ENCODE measurements at regions of chr2 and their contacts with region 1.

Region 1: DNA sequence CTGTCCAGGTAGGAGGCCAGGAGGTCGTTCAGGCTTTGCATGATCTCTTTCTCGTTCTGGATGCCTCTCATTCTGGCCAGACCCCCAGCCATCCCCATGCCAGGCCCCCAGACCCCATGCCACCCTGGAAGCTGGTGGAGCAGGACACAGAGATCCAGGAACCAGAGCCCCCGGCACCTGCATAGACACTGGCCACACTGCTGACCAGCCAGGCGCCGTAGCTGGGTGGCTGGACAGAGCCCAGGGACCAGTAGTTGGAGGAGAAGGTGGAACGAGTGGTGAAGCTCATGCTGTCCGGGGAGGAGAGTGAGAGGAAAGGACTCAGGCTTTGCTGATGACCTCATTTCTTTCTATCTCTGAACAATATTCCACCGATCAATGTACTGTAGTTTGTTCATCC is 35.5 kb downstream of the SLC4A5 start:
- DNase-seq: no peak
- H3K4me3 ChIP-seq: no peak overlapping the region
- H3K27ac ChIP-seq: no peak overlapping the region
- H3K4me1 ChIP-seq: no peaks in the 10 kb centered on the region
- H3K27me3 ChIP-seq: peaks cover 4% of the 10 kb centered on the region in 2 experiments
- CTCF ChIP-seq: no peak
- POLR2A ChIP-seq: no peak

Region 2: DNA sequence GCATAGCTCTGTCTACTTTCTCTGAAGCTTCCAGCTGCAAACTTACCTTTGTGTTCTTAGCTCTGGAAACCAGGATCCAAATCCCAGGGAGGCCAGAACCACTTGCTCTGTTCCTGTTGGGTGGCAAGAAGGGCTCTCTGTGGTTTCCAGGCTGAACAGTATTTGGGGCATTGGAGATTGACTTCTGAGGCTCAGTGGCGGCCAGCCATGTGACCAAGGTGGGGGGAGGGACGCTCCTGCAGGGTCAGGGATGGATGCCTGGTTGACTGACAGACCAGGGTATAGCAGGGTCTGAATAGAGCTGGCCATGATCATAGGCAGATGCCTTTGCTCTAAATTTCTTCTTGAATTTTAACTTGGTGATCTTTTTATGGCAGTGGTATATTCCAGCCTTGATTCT is 20.4 kb after region 1 on chr2:
- CTCF ChIA-PET with region 1: interaction called, 14 read pairs
- POLR2A ChIA-PET with region 1: no interaction called
- dilution Hi-C with region 1: no loop called
- intact Hi-C with region 1: no loop called
- DNase-seq: no peak
- H3K4me3 ChIP-seq: no peak overlapping the region
- H3K27ac ChIP-seq: no peak overlapping the region
- H3K4me1 ChIP-seq: no peaks in the 10 kb centered on the region
- H3K27me3 ChIP-seq: peaks cover 9 to 14% of the 10 kb centered on the region in 2 experiments
- CTCF ChIP-seq: no peak
- POLR2A ChIP-seq: no peak

Region 3: GRCh38 chr2:74406035-74406434 is 98.3 kb after region 1 on chr2:
- CTCF ChIA-PET with region 1: no interaction called
- POLR2A ChIA-PET with region 1: no interaction called
- dilution Hi-C with region 1: no loop called
- intact Hi-C with region 1: no loop called
- DNase-seq: no peak
- H3K4me3 ChIP-seq: no peak overlapping the region
- H3K27ac ChIP-seq: no peak overlapping the region
- H3K4me1 ChIP-seq: no peaks in the 10 kb centered on the region
- H3K27me3 ChIP-seq: peaks cover 3 to 15% of the 10 kb centered on the region in 2 experiments
- CTCF ChIP-seq: no peak
- POLR2A ChIP-seq: no peak

Measured in endothelial cell of umbilical vein (primary cell).